ENCODE measurements at regions of chr2 and their contacts with region 1.

Region 1: GRCh38 chr2:15159751-15160177 is 401.4 kb downstream of the NBAS start:
- DNase-seq: peak; percentile 41
- H3K4me3 Mint-ChIP-seq: no peak overlapping the region
- H3K27ac Mint-ChIP-seq: no peak overlapping the region
- H3K4me1 Mint-ChIP-seq: peaks cover 9% of the 10 kb centered on the region
- H3K27me3 Mint-ChIP-seq: peaks cover 24% of the 10 kb centered on the region

Region 2: DNA sequence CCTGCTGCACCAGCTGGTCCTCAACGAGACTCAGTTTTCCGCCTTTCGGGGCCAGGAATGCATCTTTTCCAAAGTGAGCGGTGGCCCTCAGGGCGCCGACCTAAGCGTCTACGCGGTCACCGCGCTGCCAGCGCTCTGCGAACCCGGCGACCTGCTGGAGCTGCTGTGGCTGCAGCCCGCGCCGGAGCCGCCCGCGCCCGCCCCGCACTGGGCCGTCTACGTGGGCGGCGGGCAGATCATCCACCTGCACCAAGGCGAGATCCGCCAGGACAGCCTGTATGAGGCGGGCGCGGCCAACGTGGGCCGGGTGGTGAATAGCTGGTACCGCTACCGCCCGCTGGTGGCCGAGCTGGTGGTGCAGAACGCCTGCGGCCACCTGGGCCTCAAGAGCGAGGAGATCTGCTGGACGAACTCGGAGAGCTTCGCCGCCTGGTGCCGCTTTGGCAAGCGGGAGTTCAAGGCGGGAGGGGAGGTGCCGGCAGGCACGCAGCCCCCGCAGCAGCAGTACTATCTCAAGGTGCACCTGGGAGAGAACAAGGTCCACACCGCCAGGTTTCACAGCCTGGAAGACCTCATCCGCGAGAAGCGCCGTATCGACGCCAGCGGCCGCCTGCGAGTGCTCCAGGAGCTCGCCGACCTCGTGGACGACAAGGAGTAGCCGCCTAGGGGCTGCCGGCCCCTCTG is 525.4 kb before region 1 on chr2:
- CTCF ChIA-PET with region 1: no interaction called
- intact Hi-C with region 1: loop called (anchors 10 kb)
- DNase-seq: peak; percentile 27
- H3K4me3 Mint-ChIP-seq: no peak overlapping the region
- H3K27ac Mint-ChIP-seq: no peak overlapping the region
- H3K4me1 Mint-ChIP-seq: no peaks in the 10 kb centered on the region
- H3K27me3 Mint-ChIP-seq: peaks cover 61% of the 10 kb centered on the region

Region 3: DNA sequence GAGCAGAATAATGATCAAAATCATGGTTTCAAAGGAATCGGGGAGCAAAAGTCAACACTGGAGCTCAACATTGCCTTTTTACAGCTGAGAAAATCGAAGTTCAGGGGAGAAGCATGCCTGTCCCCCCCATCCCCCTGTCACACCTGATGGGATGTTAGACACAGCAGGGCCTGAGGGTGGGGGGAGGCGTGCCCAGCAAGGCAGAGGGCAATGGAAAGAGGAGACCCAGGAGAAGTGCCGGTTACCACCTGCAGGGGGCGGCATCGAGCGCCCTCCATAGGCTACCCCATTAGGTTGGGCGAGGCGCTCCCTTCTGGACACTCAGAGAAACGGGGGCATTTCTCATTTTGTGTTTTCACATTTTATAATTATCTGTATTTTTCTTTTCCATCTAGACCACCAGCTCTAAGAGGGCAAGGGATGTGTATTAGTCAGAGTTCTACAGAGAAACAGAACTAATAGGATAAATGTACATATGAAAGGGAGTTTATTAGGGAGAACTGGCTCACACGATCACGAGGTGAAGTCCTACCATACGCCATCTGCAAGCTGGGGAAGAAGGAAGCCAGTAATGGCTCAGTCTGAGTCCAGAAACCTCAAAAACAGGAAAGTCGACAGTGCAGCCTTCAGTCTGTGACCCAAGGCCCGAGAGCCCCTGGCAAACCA is 255.9 kb before region 1 on chr2:
- CTCF ChIA-PET with region 1: no interaction called
- intact Hi-C with region 1: loop called (anchors 1 kb)
- DNase-seq: peak; percentile 72
- H3K4me3 Mint-ChIP-seq: no peak overlapping the region
- H3K27ac Mint-ChIP-seq: no peak overlapping the region
- H3K4me1 Mint-ChIP-seq: no peaks in the 10 kb centered on the region
- H3K27me3 Mint-ChIP-seq: peaks cover 6% of the 10 kb centered on the region

Region 4: DNA sequence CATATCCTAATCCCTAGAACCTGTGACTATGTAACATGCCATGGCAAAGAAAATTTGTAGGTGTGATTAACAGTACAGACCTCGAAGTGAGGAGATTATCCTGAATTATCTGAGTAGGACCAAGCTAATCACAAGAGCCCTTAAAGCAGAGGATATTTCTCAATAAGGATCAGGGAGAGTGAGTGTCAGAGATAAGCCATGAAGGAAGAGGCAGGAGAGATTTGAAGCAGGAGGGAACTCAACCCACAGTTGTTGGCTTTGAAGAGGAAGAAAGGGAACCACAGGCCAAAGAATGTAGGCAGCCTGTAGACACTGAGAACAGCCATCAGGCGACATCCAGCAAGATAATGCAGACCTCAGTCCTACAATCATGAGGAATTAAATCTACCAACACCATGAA is 172.0 kb after region 1 on chr2:
- CTCF ChIA-PET with region 1: no interaction called
- intact Hi-C with region 1: no loop called
- DNase-seq: no peak
- H3K4me3 Mint-ChIP-seq: no peak overlapping the region
- H3K27ac Mint-ChIP-seq: no peak overlapping the region
- H3K4me1 Mint-ChIP-seq: peaks cover 2% of the 10 kb centered on the region
- H3K27me3 Mint-ChIP-seq: no peaks in the 10 kb centered on the region

Measured in activated naive CD4-positive, alpha-beta T cell treated with anti-CD3 and anti-CD28 coated beads for 36 hours (primary cell).